ENCODE measurements at regions of chr7 and their contacts with region 1.

Region 1: DNA sequence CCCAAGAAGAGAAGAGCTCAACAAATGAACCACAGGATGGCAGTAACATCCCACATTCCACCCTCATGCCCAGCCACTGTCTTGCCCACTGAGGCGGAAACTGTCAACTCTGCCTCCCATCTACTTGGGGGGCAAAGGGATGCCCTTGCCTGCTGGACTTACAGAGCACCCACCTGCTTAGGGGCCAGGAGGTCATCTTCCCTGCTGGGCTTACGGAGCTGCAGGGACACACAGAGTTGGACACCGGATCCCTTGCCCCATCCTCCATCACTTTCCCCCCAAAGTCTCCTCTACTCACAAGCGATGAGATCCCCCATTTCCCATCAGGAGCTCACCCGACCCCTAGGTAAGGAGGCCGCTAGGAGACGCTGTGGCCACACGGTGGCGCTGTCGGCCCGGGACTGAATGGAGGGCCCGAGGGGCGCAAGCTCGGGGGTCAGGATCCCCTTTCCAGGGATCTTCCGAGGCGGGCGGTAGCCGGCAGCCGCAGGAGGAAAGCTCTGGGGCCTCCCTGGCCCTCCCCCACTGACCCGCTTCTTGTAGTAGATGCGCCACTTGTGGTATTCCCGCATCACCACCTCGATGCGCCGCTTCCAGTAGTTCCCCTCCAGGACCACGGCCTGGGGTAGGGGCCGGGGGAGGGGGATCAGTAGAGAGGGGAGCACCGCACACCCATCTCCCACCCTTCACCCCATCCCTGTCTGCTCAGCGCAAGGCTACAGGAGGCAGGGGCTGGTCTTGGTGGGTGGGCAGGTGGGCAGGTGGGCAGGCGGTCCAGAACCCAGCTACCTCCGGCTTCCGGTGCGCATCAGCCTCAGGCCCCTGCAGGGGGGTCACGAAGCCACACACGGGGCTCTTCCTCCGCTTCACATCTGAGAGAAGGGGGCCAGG is 17.3 kb downstream of the MLXIPL start:
- DNase-seq: peak; percentile 53
- H3K4me3 ChIP-seq: no peak overlapping the region
- H3K27ac ChIP-seq: no peak overlapping the region
- H3K4me1 ChIP-seq: no peaks in the 10 kb centered on the region
- H3K27me3 ChIP-seq: no peaks in the 10 kb centered on the region

Region 2: DNA sequence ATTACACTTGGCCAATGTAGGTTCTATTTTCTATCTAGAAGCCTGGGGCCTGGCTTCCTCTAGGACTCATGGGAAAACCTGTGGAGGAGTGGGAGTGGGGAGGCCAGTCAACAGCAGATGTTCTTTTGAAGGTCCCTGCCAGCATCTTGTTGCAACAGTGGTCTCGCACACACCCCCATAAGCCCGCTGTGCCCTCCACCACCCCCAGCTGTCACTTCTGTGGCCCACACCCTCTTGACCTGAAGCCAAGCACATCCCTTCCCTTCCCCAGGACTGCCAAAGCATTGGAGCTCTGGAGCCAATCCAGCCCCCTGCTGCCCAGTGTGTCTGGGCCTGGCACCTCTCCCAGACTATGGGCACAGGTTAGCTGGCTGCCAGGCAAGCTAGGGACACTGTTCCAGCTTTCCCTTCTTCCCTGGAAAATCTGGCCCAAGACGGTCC is 114.4 kb after region 1 on chr7:
- in situ Hi-C with region 1: loop called (anchors 10 kb)
- DNase-seq: peak; percentile 29
- H3K4me3 ChIP-seq: no peak overlapping the region
- H3K27ac ChIP-seq: no peak overlapping the region
- H3K4me1 ChIP-seq: peaks cover 13% of the 10 kb centered on the region
- H3K27me3 ChIP-seq: no peaks in the 10 kb centered on the region

Region 3: DNA sequence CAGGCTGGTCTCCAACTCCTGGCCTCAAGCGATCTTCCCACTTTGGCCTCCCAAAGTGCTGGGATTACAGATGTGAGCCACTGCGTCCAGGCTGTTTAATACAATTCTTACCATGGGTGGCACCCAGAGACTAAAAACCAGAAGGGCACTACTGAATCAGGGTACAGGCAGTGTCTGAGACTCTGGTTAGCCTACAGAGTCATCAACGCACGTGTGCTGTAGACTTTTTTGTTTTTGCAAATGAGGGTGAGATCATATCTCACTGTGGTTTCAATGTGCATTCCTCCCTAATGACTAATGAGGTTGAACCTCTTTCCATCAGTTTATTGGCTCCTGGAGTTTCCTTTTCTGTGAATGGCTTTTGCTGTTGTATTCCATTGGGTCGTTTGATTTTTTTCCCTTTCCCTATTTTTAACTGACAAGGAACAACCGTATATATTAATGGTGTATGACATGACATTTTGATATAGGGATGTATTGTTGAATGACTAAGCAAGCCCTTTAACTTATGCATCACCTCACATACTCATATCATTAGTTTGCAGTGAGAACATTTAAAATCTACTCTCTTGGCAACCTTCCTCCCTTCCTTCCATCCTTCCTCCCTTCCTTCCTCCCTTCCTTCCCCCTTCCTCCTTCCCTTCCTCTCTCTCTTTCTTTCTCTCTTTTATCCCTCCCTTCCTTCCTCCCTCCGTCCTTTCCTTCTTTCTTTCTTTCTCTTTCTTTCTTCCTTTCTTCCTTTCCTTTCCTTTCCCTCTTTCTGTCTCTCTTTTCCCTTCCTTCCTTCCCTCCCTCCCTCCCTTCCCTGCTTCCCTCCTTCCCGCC is 244.6 kb after region 1 on chr7:
- in situ Hi-C with region 1: loop called (anchors 25 kb)
- DNase-seq: peak; percentile 97
- H3K4me3 ChIP-seq: peak overlapping the region; percentile 38
- H3K27ac ChIP-seq: peak overlapping the region; percentile 99
- H3K4me1 ChIP-seq: peaks cover 41% of the 10 kb centered on the region
- H3K27me3 ChIP-seq: no peaks in the 10 kb centered on the region

Measured in GM23248 (cell line).